ENCODE measurements at regions of chr7 and their contacts with region 1.

Region 1: GRCh38 chr7:80918909-80919662 is at the start of gene SEMA3C:
- H3K4me3 Mint-ChIP-seq: peak within 1 kb of the TSS; percentile 89
- H3K27ac Mint-ChIP-seq: peak within 1 kb of the TSS; percentile 92
- H3K4me1 Mint-ChIP-seq: peaks cover 29% of the 10 kb centered on the region
- H3K27me3 Mint-ChIP-seq: peaks cover 3% of the 10 kb centered on the region

Region 2: GRCh38 chr7:80699045-80699638 is 219.9 kb before region 1 on chr7:
- intact Hi-C with region 1: loop called (anchors 1 kb)
- H3K4me3 Mint-ChIP-seq: no peak overlapping the region
- H3K27ac Mint-ChIP-seq: no peak overlapping the region
- H3K4me1 Mint-ChIP-seq: peaks cover 13% of the 10 kb centered on the region
- H3K27me3 Mint-ChIP-seq: no peaks in the 10 kb centered on the region

Region 3: DNA sequence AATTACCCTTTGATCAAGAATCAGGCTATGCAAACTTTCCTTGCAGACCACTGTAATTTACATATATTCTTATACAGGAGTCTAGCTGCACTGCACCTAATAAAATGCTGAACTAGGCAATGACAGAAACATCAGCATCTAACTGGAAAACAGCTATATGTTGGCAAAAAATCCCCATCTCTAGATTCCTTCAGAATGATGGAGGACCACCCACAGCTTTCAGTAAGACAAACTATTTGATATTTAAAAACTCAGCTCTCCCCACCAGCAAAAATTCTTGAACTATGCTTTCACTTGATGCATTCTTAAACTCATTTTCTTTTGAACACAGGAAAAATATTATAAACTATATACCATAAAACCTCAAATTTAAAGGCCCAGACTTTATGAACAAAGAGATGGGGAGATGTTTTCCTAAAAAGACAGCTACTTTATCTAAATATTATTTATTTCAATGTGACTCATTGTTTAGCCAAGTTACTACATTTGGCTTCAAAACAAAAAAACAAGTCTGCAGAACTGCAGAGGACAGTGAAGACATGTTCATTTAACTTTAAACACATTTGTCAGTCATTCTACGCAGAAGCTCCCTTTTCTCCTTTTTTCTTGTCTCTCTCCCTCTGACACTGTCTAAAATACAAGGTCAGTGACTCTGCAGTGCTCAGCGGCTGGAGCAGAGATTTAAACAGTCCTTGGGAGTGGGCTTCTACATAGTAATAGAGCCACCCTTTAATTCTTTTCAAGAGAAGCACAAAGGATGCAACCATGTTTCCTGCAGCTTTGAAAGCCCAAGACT is 77.5 kb before region 1 on chr7:
- intact Hi-C with region 1: loop called (anchors 5 kb)
- H3K4me3 Mint-ChIP-seq: no peak overlapping the region
- H3K27ac Mint-ChIP-seq: no peak overlapping the region
- H3K4me1 Mint-ChIP-seq: peaks cover 32% of the 10 kb centered on the region
- H3K27me3 Mint-ChIP-seq: no peaks in the 10 kb centered on the region

Region 4: GRCh38 chr7:80883188-80884025 is 35.7 kb before region 1 on chr7:
- intact Hi-C with region 1: loop called (anchors 5 kb)
- H3K4me3 Mint-ChIP-seq: peak overlapping the region; percentile 51
- H3K27ac Mint-ChIP-seq: peak overlapping the region; percentile 91
- H3K4me1 Mint-ChIP-seq: peaks cover 37% of the 10 kb centered on the region
- H3K27me3 Mint-ChIP-seq: no peaks in the 10 kb centered on the region

Region 5: DNA sequence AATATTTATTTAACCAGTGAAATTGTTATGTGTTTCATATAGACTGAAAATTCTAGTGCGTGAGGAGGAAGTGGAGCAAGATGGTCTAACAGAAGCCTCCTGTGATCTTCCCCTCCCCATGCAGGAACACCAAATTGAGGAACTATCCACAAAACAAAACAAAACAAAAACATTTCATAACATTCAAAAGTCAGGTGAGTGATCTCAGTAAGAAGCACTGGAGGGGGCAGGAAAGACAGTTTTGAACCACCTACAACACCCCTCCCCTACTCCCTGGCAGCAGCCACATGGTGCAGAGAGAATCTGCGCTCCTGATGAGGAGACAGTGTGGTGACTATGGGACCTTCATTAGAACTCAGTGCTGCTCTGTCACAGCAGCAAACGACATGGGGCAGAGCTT is 221.7 kb after region 1 on chr7:
- intact Hi-C with region 1: loop called (anchors 10 kb)
- H3K4me3 Mint-ChIP-seq: peak overlapping the region; percentile 20
- H3K27ac Mint-ChIP-seq: peak overlapping the region; percentile 84
- H3K4me1 Mint-ChIP-seq: peaks cover 26% of the 10 kb centered on the region
- H3K27me3 Mint-ChIP-seq: no peaks in the 10 kb centered on the region

Region 6: DNA sequence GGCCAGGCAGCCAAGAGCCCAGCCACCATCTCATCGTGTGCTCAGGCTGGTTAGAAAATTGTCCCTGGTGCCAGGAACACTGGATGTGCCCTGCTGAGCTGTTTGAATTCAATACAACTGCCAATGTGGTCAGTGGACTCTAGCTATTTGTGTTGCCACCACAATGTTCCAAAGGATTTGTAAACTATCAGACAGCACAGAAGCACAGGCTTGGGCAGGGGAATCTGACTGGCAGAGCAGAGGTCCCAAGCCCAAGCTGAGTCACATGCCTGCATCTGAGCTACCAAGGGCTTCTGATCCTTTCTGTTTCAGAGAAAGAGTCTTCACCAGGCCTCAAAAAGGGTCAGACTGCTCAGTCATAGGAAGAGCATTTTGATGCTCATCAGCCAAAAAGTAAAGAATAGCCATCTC is 231.9 kb after region 1 on chr7:
- intact Hi-C with region 1: no loop called
- H3K4me3 Mint-ChIP-seq: no peak overlapping the region
- H3K27ac Mint-ChIP-seq: no peak overlapping the region
- H3K4me1 Mint-ChIP-seq: no peaks in the 10 kb centered on the region
- H3K27me3 Mint-ChIP-seq: no peaks in the 10 kb centered on the region

Region 7: GRCh38 chr7:81256991-81257390 is 337.9 kb after region 1 on chr7:
- intact Hi-C with region 1: loop called (anchors 5 kb)
- H3K4me3 Mint-ChIP-seq: no peak overlapping the region
- H3K27ac Mint-ChIP-seq: no peak overlapping the region
- H3K4me1 Mint-ChIP-seq: no peaks in the 10 kb centered on the region
- H3K27me3 Mint-ChIP-seq: no peaks in the 10 kb centered on the region

Region 8: DNA sequence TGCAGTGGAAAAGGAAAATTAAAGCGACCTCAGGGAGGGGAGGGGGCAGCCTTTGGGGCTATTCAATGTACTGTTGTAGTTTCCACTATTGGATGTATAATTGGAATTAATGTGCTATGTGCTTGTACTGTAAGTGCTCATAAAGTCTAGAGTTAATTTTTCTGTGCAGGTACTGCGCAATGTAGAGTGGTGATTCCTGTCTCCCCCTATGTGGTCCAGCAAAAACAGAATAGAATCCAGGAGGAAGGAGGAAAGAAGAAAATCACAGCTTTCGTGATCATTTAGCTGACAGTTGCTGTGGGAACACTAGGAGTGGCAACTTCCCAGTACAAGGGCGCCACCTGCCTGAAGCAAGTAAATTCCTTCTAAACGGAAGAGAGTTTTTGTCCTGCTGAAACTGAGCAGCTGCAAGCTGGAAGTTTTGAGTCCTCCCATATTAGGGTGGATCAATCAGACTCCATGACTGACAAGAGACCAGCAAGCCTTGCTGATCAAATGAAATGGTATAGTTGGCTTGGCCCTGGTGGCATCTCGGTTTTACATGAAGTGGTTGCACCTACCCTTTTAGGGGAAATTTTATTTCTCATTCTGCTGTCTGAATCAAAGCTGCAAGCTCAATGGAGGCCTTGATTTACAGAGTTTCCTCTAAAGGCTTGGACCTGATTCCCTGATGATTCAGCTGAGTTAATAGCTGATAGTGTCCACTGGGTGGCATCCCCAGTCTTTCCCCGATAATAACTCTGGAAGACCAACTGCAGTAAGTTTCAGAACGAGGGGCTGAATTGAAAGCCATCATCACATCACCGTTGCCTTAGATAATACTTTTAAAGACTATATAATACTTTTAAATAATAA is 551.0 kb after region 1 on chr7:
- intact Hi-C with region 1: loop called (anchors 2 kb)
- H3K4me3 Mint-ChIP-seq: no peak overlapping the region
- H3K27ac Mint-ChIP-seq: no peak overlapping the region
- H3K4me1 Mint-ChIP-seq: no peaks in the 10 kb centered on the region
- H3K27me3 Mint-ChIP-seq: peaks cover 1% of the 10 kb centered on the region

Region 9: GRCh38 chr7:81873559-81873958 is 954.5 kb after region 1 on chr7:
- intact Hi-C with region 1: no loop called
- H3K4me3 Mint-ChIP-seq: no peak overlapping the region
- H3K27ac Mint-ChIP-seq: no peak overlapping the region
- H3K4me1 Mint-ChIP-seq: peaks cover 5% of the 10 kb centered on the region
- H3K27me3 Mint-ChIP-seq: no peaks in the 10 kb centered on the region

Region 10: GRCh38 chr7:81925530-81925929 is 1006.4 kb after region 1 on chr7:
- intact Hi-C with region 1: no loop called
- H3K4me3 Mint-ChIP-seq: no peak overlapping the region
- H3K27ac Mint-ChIP-seq: no peak overlapping the region
- H3K4me1 Mint-ChIP-seq: peaks cover 5% of the 10 kb centered on the region
- H3K27me3 Mint-ChIP-seq: no peaks in the 10 kb centered on the region